Cardiac septum (tissue), 1 donor: ENCODE measurements at regions of chr6 and their contacts with region 1.

Region 1: GRCh38 chr6:75526502-75527127 is 33.0 kb upstream of the FILIP1 start:
- DNase-seq: no peak

Region 2: GRCh38 chr6:75266716-75267291 is 259.8 kb before region 1 on chr6:
- intact Hi-C with region 1: loop called (anchors 2 kb)
- DNase-seq: no peak

Region 3: DNA sequence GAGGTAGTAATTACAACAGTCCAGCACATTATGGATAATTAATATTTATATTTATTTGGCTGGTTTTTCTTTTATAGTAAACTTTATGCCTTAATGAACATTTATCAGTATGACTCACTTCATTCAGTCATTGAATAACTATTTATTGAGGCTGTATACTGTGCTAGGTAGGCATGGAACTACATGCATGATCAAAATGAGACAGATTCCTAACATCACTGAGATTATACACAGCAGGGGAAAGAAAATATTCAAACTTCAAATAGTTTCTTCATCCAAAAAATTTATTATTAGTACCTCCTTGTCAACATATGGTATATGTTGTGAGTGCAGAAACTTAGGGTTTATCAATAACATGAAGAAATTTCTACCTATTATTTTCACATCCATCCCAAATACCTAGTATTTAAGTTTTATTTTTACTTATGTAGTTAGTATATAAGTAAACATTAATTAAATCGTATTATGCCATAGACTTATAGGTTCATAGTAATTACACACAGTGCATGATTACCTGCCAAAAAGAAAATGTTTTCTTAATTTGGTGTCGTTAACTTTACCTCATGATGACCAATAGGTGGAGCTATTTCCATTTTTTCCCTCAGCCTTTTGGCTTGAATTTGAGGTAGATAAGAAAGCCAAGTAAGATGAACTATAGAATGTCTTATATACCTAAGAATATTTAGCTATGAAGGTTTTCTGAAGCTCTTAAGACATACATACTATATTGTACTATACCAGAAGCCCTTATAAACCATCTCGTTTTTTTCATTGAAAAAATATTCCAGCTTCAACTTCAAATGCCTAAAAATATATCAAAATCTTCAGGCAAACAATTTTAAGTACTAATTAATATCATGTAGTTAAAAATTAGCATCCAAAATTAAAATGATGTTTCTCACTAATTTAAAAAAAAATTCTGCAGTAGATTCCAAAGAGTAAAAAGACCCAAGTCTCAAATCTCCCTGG is 229.5 kb before region 1 on chr6:
- intact Hi-C with region 1: loop called (anchors 5 kb)
- DNase-seq: no peak

Region 4: GRCh38 chr6:75317503-75318206 is 209.0 kb before region 1 on chr6:
- intact Hi-C with region 1: no loop called
- DNase-seq: no peak

Region 5: DNA sequence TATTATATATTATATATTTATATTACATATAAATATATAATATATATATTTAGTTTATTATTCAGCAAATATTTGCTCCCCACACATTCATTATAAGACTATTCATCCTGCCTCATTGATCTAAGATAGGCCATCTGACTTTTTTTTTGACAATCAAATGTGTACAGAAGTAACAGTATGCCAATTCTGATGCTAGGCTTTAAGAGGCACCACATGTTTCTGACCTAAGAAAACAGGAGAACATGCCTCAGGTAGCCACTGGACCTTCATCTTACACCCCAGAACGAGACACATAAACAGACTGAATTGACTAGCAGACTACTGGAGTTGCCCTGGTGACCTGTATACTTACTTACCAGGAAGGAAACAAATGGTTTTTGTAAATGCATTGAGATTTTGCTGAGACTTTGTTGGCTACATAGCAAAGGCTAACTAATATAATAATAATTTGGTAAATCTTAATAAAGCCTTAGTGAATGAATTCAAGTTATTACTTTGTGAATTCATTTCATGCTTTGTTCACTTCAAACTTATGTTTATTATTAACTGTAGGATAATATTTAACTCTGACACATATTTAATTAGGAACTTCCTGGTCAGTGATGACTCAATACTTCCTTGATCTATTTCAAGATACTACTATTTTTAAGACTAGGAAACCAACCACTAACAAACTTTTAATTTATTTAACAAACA is 209.0 kb after region 1 on chr6:
- intact Hi-C with region 1: no loop called
- DNase-seq: no peak